ENCODE measurements at regions of chr20 and their contacts with region 1.

Region 1: GRCh38 chr20:44733341-44734069 is 12.2 kb upstream of the KCNK15 start:
- DNase-seq: peak; percentile 57
- H3K4me3 ChIP-seq: no peak overlapping the region
- H3K27ac ChIP-seq: no peak overlapping the region
- H3K4me1 ChIP-seq: peaks cover 32% of the 10 kb centered on the region
- H3K27me3 ChIP-seq: no peaks in the 10 kb centered on the region
- CTCF ChIP-seq: peak; percentile 88 to 92

Region 2: DNA sequence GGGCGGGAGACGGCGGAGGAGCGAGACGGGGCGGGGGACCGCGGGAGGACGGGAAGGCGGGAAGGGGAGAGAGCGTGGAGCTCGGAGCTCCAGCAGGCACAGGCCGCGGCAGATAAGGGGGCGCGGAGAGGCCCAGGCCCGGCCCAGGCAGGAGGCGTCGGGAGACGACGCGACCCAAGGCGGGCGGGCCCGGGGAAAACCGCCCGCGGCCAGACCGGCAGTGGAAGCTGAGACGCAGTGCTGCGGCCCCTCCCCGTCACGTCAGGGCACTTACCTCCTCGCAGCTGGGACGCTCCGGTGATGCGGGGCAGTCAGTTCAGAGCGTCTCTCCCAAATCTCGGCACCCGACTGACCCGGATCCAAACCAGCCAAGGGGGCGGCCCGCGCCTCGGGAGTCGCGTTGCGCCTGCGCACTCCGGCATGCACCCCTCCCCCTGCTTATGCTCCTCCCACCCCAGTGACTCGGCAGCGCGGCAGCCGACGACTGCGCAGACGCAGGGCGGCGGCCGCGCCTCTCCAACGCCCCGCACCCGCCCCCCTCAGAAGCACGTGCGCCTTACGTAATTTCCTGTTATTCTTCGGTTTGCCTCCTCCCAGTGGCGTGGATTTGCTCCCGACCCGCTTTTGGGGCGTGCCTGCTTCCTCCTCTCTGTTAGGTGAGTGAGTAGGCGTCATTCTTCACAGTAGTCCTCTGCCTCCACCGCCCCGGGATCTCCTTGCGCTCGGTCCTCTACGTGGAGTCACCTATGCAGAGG is 522.9 kb before region 1 on chr20 and contains the start of gene OSER1:
- CTCF ChIA-PET with region 1: no interaction called
- dilution Hi-C with region 1: no loop called
- in situ Hi-C with region 1: no loop called
- intact Hi-C with region 1: loop called (anchors 10 kb)
- DNase-seq: peak; percentile 98
- H3K4me3 ChIP-seq: peak within 1 kb of the TSS; percentile 76 to 99 (median 97)
- H3K27ac ChIP-seq: peak within 1 kb of the TSS; percentile 97
- H3K4me1 ChIP-seq: peaks cover 39% of the 10 kb centered on the region
- H3K27me3 ChIP-seq: no peaks in the 10 kb centered on the region
- CTCF ChIP-seq: no peak
- total RNA-seq, gene OSER1: 18.5 to 29.5 TPM

Region 3: DNA sequence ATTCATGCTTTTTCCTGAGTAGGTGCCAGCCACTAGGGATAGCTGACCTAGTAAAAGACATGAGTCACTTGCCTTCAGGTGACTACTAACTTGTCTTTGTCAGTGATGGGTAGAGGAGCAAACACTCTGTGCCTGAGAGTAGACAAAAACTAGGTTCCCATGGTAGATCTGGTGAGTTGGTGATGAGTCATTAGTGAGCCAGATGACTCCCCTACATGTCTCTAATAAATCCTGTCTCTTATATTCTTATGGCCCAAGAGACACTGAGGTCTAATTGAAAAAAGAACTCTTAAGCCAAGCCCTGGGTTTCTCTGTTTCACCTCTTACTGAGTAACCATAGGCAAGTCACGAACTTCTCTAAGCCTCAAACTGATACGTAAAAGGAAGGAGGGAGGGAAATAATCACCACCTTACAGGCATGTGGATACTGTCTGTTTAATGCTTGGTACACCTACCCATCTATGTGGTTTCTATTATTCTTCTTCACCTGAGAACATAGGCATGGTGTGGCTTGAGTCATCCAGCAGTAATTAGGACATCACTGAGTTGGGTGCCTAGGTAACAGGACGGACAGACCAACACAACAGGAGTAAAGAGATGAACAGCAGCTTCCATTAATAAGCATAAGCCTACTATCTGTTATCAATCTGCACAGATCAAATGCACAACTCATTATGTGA is 237.6 kb before region 1 on chr20:
- CTCF ChIA-PET with region 1: no interaction called
- dilution Hi-C with region 1: no loop called
- in situ Hi-C with region 1: no loop called
- intact Hi-C with region 1: loop called (anchors 10 kb)
- DNase-seq: peak; percentile 99
- H3K4me3 ChIP-seq: no peak overlapping the region
- H3K27ac ChIP-seq: peak overlapping the region; percentile 100
- H3K4me1 ChIP-seq: peaks cover 41% of the 10 kb centered on the region
- H3K27me3 ChIP-seq: no peaks in the 10 kb centered on the region
- CTCF ChIP-seq: no peak

Region 4: DNA sequence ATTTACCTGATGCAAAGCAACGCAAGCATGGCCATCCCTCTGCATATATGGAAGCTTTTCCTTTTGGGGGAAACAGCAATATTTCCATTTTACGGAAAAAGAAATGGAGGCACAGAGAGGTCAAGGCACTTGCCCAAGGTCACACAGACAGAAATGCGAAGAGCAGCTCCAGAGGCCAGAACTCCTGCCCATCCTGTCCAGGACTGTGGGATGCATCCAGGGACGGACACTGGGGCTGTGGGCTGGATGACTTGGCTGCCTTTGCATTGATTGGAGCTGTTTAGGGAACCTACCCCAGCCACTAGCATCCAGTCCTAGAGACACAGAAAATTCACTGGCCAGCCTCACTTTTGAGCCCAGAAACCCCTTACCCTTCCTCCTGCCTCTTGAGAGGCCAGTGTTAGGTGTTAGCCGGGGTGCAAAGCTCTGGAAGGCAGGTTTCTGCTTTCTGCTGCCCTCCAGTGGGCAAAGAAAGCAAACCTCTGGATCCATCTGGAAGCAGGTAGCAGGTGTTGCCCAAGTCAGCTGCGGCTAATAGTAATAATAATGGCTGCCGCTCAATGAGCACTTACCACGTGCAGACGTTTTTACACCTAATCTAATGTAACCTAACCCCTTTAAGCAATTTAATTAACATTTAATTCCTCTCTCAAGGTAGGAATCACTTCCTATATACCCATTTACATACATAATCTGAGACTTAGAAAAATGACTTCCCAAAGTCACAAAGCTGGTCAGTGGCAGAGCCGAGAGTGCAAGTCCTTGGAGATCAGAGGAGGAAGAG is 50.0 kb before region 1 on chr20:
- CTCF ChIA-PET with region 1: interaction called, 6 read pairs
- dilution Hi-C with region 1: no loop called
- in situ Hi-C with region 1: loop called (anchors 5 kb)
- intact Hi-C with region 1: loop called (anchors 1 kb)
- DNase-seq: peak; percentile 58
- H3K4me3 ChIP-seq: no peak overlapping the region
- H3K27ac ChIP-seq: no peak overlapping the region
- H3K4me1 ChIP-seq: peaks cover 8% of the 10 kb centered on the region
- H3K27me3 ChIP-seq: no peaks in the 10 kb centered on the region
- CTCF ChIP-seq: peak; percentile 63 to 84

Region 5: DNA sequence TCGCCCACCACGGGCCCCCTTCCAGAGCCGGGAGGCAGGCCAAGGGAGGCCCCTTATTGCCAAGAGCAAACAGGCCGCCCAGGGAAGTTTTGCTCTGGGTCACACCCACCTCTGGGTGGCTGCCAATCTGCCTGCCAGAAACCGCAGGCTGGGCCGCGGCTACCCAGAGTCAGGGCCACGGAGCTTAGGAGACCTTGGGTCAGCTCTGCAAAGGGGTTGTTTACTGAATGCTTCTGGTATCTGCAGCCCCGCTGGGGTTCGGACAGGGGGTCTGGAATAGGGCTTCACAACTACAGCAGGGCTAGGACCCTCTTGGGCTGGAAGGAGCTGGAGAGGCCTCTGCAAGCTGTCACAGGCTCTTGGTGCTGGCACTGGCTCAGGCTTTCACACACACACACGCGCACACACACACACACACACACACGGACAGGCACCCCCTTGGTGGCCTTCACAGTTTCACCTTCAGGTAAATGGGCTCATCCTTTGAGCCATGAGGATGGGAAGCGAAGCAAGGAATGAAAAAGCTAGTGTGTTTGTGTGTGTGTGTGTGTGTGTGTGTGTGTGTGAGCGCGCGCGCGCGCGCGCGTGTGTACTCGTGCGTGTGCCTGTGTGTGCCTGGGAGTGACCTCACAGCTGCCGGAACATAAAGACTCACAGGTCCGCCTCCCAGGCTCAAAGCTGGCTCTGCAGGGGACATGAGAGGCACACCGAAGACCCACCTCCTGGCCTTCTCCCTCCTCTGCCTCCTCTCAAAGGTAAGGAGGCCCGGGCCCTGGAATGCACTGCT is 18.6 kb before region 1 on chr20 and contains the start of gene CCN5:
- CTCF ChIA-PET with region 1: no interaction called
- dilution Hi-C with region 1: no loop called
- in situ Hi-C with region 1: no loop called
- intact Hi-C with region 1: loop called (anchors 2 kb)
- DNase-seq: peak; percentile 82
- H3K4me3 ChIP-seq: no peak within 1 kb of the TSS
- H3K27ac ChIP-seq: no peak within 1 kb of the TSS
- H3K4me1 ChIP-seq: peaks cover 32% of the 10 kb centered on the region
- H3K27me3 ChIP-seq: no peaks in the 10 kb centered on the region
- CTCF ChIP-seq: no peak
- total RNA-seq, gene CCN5: 0.67 TPM in 1 of 2 donors, not detected in the other

Region 6: DNA sequence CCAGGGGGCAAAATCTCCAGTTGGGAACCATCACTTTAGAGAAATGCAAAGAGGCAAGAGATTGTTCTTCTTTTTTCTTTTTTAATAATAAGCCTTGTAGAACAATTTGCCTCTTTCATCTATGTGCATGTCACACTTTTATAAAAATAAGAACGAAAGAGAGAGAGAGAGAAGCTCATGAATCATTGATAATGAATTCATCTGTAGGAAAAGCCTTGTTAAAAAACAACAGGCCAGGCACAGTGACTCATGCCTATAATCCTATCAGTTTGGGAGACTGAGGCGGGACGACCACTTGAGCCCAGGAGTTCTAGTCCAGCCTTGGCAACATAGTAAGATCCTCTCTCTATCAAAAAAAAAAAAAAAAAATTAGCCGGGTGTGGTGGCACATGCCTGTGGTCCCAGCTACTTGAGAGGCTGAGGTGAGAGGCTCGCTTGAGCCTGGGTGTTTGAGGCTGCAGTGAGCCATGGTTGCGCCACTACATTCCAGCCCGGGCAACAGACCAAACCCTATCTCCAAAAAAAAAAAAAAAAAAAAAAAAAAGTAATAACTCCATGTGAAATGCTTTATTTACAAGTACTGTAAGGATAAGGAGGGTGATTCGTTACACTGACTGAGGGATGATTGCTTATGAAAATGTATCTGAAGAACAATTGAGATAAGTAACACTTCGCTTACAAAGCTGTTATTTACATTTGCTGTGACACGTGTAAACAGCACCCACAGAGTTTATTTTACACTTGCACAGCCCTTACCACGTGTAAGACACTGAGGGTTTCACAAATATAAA is 12.3 kb before region 1 on chr20:
- CTCF ChIA-PET with region 1: no interaction called
- dilution Hi-C with region 1: no loop called
- in situ Hi-C with region 1: no loop called
- intact Hi-C with region 1: loop called (anchors 1 kb)
- DNase-seq: peak; percentile 80
- H3K4me3 ChIP-seq: no peak overlapping the region
- H3K27ac ChIP-seq: peak overlapping the region; percentile 67
- H3K4me1 ChIP-seq: peaks cover 29% of the 10 kb centered on the region
- H3K27me3 ChIP-seq: no peaks in the 10 kb centered on the region
- CTCF ChIP-seq: no peak

Region 7: DNA sequence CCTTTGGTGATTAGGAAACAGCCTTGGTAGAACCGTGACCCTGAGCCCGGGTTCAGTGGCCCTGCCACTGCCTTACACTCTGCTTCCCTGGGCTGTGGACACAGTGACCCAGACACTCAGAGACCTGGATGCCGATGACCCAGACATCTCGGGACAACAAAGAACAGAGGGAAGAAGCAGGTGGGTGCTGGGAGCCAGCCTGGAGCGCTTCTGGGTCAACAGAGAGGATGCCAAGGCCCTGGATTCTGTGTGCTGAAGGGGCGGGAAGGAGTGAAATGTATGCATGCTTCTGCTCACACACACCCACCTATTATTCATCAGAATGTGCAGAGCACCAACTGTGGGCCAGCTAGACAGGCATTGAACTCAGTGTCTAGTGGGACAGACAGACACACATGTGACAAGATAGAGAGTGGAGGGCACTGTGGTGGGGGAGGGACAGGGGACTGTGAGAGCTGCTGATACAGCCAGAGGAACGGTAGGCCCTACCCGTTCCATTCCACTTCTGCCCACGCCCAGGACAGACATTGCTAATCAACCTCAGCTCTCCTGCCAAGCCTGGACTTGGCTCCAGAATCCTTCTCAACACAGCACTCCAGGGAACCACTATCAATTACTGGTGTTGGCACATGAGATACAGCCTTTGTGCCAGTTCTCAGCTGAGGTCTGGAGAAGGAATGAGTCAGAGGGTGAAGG is 32.3 kb after region 1 on chr20:
- CTCF ChIA-PET with region 1: no interaction called
- dilution Hi-C with region 1: no loop called
- in situ Hi-C with region 1: no loop called
- intact Hi-C with region 1: no loop called
- DNase-seq: peak; percentile 56
- H3K4me3 ChIP-seq: no peak overlapping the region
- H3K27ac ChIP-seq: no peak overlapping the region
- H3K4me1 ChIP-seq: peaks cover 3% of the 10 kb centered on the region
- H3K27me3 ChIP-seq: no peaks in the 10 kb centered on the region
- CTCF ChIP-seq: no peak